ENCODE measurements at regions of chr13 and their contacts with region 1.

Region 1: DNA sequence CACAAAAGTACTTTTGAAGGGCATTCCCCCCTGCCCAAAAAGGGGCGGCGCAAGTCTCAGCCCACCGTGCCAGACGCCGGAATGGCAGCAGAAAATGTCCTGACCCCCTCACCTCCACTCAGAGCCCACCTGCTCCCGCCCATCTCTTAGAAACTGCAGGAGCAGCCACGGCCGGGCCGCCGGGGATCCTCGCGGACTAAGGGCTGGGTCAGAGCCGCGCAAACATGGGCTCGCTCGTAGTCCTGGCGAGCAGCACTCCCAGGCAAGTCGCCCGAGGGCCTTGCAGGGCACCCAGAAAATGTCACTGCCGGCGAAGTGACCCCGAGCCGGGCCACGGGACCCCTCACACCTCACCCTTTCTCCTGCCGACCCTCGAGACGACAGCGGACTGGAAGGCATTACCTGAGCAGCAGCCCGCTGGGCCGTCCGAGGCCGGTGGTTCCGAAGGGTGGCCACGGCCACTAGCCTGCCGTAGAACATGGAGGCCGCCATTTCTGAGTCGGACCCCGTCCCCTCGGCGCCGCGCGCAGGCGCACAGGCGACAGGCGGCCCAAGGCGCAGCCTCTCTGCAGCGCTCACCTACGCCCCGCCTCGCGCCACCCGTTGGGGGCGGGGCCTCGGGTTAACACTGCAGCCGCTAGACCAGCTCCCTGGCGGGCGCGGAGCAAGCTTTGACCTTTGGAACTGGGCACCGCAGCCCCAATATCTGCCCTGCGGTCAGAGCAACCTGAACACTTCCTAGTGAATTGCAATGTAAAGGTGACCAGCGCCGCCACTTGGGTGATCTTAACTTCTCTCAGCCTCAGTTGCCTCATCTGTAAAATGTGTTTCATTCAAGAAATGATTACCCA is at the start of gene SUCLA2:
- DNase-seq: peak; percentile 87
- H3K4me3 ChIP-seq: peak within 1 kb of the TSS; percentile 88 to 93 (median 92)
- H3K27ac ChIP-seq: peak within 1 kb of the TSS; percentile 62
- H3K4me1 ChIP-seq: peaks cover 15% of the 10 kb centered on the region
- H3K27me3 ChIP-seq: no peaks in the 10 kb centered on the region
- CTCF ChIP-seq: no peak
- POLR2A ChIP-seq: peak; percentile 92
- total RNA-seq, gene SUCLA2: 32.0 and 37.0 TPM in 2 replicates

Region 2: GRCh38 chr13:47726351-47726750 is 274.7 kb before region 1 on chr13:
- CTCF ChIA-PET with region 1: no interaction called
- POLR2A ChIA-PET with region 1: no interaction called
- dilution Hi-C with region 1: no loop called
- intact Hi-C with region 1: no loop called
- DNase-seq: no peak
- H3K4me3 ChIP-seq: no peak overlapping the region
- H3K27ac ChIP-seq: no peak overlapping the region
- H3K4me1 ChIP-seq: no peaks in the 10 kb centered on the region
- H3K27me3 ChIP-seq: no peaks in the 10 kb centered on the region
- CTCF ChIP-seq: no peak
- POLR2A ChIP-seq: no peak

Region 3: DNA sequence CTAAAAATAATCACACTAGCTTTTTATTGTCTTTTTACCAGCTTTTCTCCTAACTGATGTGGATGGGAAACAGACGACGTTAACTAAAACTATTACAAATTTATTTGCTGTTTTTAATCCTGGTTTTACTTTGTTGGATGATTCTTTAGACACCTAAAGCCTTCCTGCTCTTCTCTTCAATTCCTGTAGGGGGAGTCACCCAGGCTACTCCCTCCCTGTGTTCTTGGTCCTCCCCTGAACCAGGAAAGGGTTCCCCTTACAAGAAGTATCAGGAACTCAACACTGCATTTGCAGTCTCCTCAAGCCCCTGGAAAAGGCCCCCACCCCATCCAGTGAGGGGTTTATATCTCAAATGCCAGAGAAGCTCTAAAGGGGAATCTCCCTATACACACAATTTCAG is 206.0 kb before region 1 on chr13:
- CTCF ChIA-PET with region 1: no interaction called
- POLR2A ChIA-PET with region 1: no interaction called
- dilution Hi-C with region 1: no loop called
- intact Hi-C with region 1: loop called (anchors 5 kb)
- DNase-seq: no peak
- H3K4me3 ChIP-seq: no peak overlapping the region
- H3K27ac ChIP-seq: no peak overlapping the region
- H3K4me1 ChIP-seq: no peaks in the 10 kb centered on the region
- H3K27me3 ChIP-seq: no peaks in the 10 kb centered on the region
- CTCF ChIP-seq: peak; percentile 15 to 39
- POLR2A ChIP-seq: no peak

Region 4: DNA sequence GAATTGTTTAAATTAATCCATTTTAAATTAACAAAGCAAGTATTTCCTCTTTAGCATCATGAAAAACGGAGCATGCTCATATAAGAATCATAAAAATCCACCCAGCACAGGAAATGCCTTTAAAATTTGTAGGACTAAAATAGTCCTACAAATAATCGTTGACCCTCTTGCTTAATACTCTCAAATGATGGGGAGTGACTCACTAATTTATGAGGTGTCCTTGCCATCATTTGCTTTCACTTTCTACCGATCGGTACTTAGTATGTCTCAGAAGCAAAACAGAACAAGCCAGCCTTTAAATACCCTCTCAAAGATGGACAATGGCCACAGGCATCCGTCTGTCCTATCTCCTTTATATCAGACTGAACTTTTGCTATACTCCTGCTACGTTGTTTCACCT is 97.2 kb before region 1 on chr13:
- CTCF ChIA-PET with region 1: no interaction called
- POLR2A ChIA-PET with region 1: no interaction called
- dilution Hi-C with region 1: no loop called
- intact Hi-C with region 1: loop called (anchors 10 kb)
- DNase-seq: no peak
- H3K4me3 ChIP-seq: no peak overlapping the region
- H3K27ac ChIP-seq: no peak overlapping the region
- H3K4me1 ChIP-seq: peaks cover 16% of the 10 kb centered on the region
- H3K27me3 ChIP-seq: peaks cover 0 to 5% of the 10 kb centered on the region in 2 experiments
- CTCF ChIP-seq: no peak
- POLR2A ChIP-seq: no peak

Region 5: DNA sequence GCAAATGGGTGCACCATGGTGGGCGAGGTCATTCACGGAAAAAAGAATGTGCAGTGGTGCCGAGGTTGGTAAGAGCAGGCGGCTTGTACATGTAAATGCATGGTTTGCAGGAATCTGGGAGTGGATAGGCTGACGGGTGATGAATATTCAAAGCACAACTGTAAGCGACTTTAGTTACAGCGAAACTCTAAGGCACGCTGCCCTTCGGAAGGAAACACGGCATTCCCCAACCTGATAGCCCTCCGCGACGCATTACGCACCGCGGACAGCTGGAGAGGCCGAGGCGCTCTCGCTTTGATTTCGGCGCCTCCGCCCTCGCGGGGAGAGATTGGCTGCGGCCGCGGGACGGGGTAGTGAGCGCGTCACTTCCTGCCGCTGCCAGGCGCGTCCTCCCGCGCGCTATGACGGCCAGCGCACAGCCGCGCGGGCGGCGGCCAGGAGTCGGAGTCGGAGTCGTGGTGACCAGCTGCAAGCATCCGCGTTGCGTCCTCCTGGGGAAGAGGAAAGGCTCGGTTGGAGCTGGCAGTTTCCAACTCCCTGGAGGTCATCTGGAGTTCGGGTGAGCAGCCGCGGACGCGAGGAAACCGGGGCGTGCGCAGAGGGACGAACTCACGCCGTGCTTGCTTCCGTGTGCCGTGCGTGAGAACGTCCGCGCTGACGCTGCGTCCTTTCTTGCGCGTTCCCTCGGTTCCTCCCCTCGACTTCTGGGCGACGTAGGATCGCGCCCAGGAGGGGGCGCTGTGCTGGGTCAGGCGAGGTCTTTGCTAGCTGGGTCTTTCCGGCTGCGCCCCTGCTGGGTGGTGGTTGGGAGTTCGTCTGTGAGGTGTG is 36.6 kb after region 1 on chr13 and contains the start of gene NUDT15:
- CTCF ChIA-PET with region 1: interaction called, 6 read pairs
- POLR2A ChIA-PET with region 1: interaction called, 3 read pairs
- dilution Hi-C with region 1: no loop called
- intact Hi-C with region 1: loop called (anchors 1 kb)
- DNase-seq: peak; percentile 96
- H3K4me3 ChIP-seq: peak within 1 kb of the TSS; percentile 54 to 75 (median 72)
- H3K27ac ChIP-seq: peak within 1 kb of the TSS; percentile 82
- H3K4me1 ChIP-seq: peaks cover 16% of the 10 kb centered on the region
- H3K27me3 ChIP-seq: no peaks in the 10 kb centered on the region
- CTCF ChIP-seq: peak; percentile 100
- POLR2A ChIP-seq: peak; percentile 95
- total RNA-seq, gene NUDT15: 20.6 and 21.6 TPM in 2 replicates

Region 6: DNA sequence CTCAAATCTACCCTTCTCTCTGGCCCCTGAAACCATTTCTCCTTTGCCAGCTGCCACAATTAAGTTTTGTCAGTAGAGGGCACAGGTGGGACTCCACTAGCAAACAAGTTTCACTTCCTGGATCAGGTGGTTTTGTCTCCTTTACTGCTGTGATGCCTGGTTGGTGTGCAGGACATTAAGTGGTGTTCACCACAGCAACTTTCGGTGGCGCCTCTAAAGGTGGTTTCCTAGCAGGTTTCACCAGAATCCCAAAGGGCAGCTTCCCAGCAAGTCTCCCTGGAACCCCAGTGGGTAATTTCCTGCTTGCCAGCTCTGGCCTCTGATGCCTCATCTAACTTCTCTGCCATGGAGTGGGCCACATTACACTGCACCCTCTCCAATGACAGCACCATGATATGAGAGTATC is 77.3 kb after region 1 on chr13:
- CTCF ChIA-PET with region 1: no interaction called
- POLR2A ChIA-PET with region 1: no interaction called
- dilution Hi-C with region 1: no loop called
- intact Hi-C with region 1: no loop called
- DNase-seq: peak; percentile 17
- H3K4me3 ChIP-seq: no peak overlapping the region
- H3K27ac ChIP-seq: no peak overlapping the region
- H3K4me1 ChIP-seq: no peaks in the 10 kb centered on the region
- H3K27me3 ChIP-seq: no peaks in the 10 kb centered on the region
- CTCF ChIP-seq: peak in 1 of 2 donors; percentile 23
- POLR2A ChIP-seq: no peak

Region 7: DNA sequence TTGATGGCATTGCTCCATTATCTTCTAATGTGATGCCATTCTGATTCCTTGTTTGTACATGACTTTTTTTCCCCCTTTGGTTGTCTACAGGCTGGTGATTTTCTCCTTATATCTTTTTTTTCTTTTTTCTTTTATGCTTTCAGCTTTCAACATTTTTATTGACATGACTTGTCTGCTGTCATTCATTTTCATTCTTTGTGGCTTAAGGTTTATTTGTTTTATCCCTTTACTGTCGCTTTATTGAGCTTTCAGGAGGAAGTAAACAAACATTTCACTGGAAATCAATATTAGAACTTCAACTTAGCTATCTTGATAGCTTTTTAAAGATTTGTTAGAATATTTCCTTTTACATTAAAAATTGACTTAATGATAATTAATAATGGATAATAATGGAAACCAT is 241.7 kb after region 1 on chr13:
- CTCF ChIA-PET with region 1: no interaction called
- POLR2A ChIA-PET with region 1: no interaction called
- dilution Hi-C with region 1: no loop called
- intact Hi-C with region 1: no loop called
- DNase-seq: no peak
- H3K4me3 ChIP-seq: no peak overlapping the region
- H3K27ac ChIP-seq: no peak overlapping the region
- H3K4me1 ChIP-seq: peaks cover 5% of the 10 kb centered on the region
- H3K27me3 ChIP-seq: no peaks in the 10 kb centered on the region
- CTCF ChIP-seq: no peak
- POLR2A ChIP-seq: no peak

Measured in endothelial cell of umbilical vein (primary cell).